ENCODE measurements at regions of chr9 and their contacts with region 1.

Region 1: GRCh38 chr9:76810377-76810957 is 46.2 kb downstream of the PCA3 start:
- DNase-seq: peak; percentile 48 to 60
- H3K4me3 ChIP-seq: no peak overlapping the region
- H3K4me1 ChIP-seq: no peaks in the 10 kb centered on the region
- H3K27me3 ChIP-seq: peaks cover 16% of the 10 kb centered on the region

Region 2: GRCh38 chr9:76882686-76883085 is 72.2 kb after region 1 on chr9:
- in situ Hi-C with region 1: no loop called
- DNase-seq: no peak
- H3K4me3 ChIP-seq: no peak overlapping the region
- H3K4me1 ChIP-seq: no peaks in the 10 kb centered on the region
- H3K27me3 ChIP-seq: no peaks in the 10 kb centered on the region

Region 3: DNA sequence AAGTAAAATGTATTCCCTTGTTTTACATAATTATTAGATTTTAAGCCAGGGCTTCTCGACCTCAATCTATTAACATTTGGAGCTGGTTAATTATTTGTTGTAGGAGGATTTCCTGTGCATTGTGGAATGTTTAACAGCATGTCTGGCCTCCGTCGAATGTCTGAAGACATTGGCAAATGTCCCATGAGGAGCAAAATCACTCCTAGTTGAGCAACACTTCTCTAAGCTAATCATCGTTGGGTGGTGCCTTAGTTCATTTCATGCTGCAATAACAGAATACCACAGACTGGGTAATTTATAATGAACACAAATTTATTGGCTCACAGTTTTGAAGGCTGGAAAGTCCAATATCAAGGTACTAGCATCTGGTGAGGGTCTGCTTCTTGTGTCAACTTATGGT is 353.4 kb after region 1 on chr9:
- in situ Hi-C with region 1: loop called (anchors 25 kb)
- DNase-seq: no peak
- H3K4me3 ChIP-seq: no peak overlapping the region
- H3K4me1 ChIP-seq: peaks cover 4% of the 10 kb centered on the region; the same call in 1 of the 2 replicates
- H3K27me3 ChIP-seq: no peaks in the 10 kb centered on the region; the same call in 1 of the 2 replicates

Measured in HAP-1 (cell line).